Calu3 (cell line): ENCODE measurements at regions of chr2 and their contacts with region 1.

Region 1: GRCh38 chr2:43759195-43759594 is 14.6 kb upstream of the DYNC2LI1 start:
- DNase-seq: peak; percentile 13
- H3K4me3 Mint-ChIP-seq: no peak overlapping the region
- H3K27ac Mint-ChIP-seq: peak overlapping the region; percentile 61
- H3K4me1 Mint-ChIP-seq: peaks cover 23% of the 10 kb centered on the region
- H3K27me3 Mint-ChIP-seq: no peaks in the 10 kb centered on the region
- CTCF ChIP-seq: no peak

Region 2: DNA sequence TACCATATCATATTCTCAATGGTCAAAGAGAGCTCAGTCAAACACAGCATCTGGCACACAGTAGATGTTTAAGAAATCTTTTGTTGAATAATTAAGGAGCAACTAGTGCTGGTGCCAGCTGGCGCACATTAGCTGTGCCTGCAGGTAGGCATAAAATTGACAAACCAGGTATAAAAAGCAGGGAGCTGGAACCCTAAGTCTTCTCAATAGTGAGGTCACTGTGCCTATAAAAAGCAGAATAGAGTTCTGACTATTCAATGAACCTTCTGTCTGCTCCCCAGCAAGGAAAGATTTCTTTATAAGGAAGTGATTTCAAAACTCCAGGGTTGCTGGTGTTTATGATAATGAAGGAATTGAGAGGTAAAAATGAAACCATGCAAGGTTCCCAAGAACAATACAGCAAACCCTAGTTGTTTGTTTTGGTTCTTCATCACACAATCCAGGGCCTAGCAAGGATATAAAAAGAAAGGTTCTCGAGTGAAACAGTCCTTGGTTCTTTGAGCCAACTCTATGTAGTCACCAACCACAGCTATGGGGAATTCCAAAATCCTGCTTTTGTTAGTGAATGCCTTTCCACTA is 239.5 kb before region 1 on chr2:
- CTCF ChIA-PET with region 1: no interaction called
- intact Hi-C with region 1: no loop called
- DNase-seq: peak; percentile 10
- H3K4me3 Mint-ChIP-seq: no peak overlapping the region
- H3K27ac Mint-ChIP-seq: peak overlapping the region; percentile 56
- H3K4me1 Mint-ChIP-seq: peaks cover 41% of the 10 kb centered on the region
- H3K27me3 Mint-ChIP-seq: no peaks in the 10 kb centered on the region
- CTCF ChIP-seq: no peak

Region 3: GRCh38 chr2:43685357-43685756 is 73.8 kb before region 1 on chr2:
- CTCF ChIA-PET with region 1: interaction called, 10 read pairs
- intact Hi-C with region 1: no loop called
- DNase-seq: no peak
- H3K4me3 Mint-ChIP-seq: no peak overlapping the region
- H3K27ac Mint-ChIP-seq: no peak overlapping the region
- H3K4me1 Mint-ChIP-seq: no peaks in the 10 kb centered on the region
- H3K27me3 Mint-ChIP-seq: no peaks in the 10 kb centered on the region
- CTCF ChIP-seq: no peak

Region 4: GRCh38 chr2:43773876-43774613 is 14.8 kb after region 1 on chr2 and contains the start of gene DYNC2LI1:
- CTCF ChIA-PET with region 1: no interaction called
- intact Hi-C with region 1: no loop called
- DNase-seq: peak; percentile 89
- H3K4me3 Mint-ChIP-seq: peak within 1 kb of the TSS; percentile 98
- H3K27ac Mint-ChIP-seq: peak within 1 kb of the TSS; percentile 98
- H3K4me1 Mint-ChIP-seq: no peaks in the 10 kb centered on the region
- H3K27me3 Mint-ChIP-seq: no peaks in the 10 kb centered on the region
- CTCF ChIP-seq: no peak
- total RNA-seq, gene DYNC2LI1: 20.0 and 24.0 TPM in 2 replicates